MCF 10A (cell line): ENCODE measurements at regions of chr7 and their contacts with region 1.

Region 1: DNA sequence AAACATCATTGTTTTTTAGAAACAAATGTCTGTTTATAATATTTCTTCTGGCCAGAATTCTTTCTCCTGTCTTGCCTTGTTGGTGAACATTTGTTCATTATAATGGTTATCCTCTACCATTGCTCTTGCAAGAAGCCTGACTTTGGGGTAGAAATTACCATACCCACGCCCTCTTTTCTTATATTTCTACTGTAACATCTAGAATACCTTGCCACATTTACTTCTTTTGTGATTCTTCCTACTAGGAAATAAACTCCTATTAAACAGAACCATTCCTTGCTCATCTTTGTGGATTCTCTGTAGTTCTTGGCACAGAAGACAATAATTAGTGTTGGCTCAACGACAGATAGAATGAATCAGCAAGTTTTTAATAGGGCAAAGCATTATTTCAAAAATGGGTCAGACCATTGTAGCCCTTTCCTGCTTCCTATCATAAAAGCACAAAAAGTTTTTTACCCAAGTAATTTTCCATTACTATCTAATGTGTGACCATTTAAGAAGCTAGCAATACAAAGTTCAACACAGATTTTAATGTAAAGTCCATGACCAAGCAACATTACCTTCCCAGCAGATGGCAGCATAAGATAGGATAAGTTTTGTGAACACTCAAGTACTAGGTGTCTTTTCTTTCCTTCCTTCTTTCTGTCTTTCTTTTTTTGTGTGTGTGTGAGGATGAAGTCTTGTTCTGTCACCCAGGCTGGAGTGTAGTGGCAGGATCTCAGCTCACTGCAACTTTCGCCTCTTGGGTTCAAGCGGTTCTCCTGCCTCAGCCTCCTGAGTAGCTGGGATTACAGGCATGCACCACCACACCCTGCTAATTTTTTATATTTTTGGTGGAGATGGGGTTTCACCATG is 270.4 kb downstream of the HGF start:
- DNase-seq: peak; percentile 80
- H3K4me3 Mint-ChIP-seq: no peak overlapping the region
- H3K27ac Mint-ChIP-seq: no peak overlapping the region
- H3K4me1 Mint-ChIP-seq: peaks cover 9% of the 10 kb centered on the region
- H3K27me3 Mint-ChIP-seq: peaks cover 21% of the 10 kb centered on the region
- CTCF ChIP-seq: peak; percentile 54

Region 2: DNA sequence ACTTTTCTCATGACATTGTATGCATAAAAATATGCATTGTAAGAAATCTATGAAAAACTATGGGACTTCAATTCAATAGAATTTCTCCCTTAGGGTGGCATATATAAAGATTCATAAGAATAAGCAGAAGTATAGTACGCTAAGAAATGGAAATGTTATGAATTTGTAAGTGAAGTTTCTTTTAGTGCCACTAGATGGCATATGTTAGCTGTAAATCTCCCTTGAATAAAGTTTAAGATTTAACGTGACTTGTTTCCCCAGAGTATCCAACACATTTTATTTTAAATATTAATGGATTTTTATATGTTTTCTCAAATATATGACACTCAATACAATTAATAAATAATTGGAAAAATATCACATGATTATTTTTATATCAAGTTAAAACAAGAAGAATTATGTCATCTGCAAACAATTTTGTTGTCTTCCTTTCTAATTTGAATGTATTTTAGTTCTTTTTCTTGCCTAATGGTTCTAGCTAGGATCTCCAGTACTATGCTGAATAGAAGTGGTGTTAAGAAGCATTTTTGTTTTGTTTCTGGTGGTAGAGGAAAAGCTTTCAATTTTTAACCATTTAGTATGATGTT is 16.8 kb before region 1 on chr7:
- CTCF ChIA-PET with region 1: interaction called, 78 read pairs
- POLR2A ChIA-PET with region 1: no interaction called
- intact Hi-C with region 1: no loop called
- DNase-seq: peak; percentile 22
- H3K4me3 Mint-ChIP-seq: no peak overlapping the region
- H3K27ac Mint-ChIP-seq: no peak overlapping the region
- H3K4me1 Mint-ChIP-seq: no peaks in the 10 kb centered on the region
- H3K27me3 Mint-ChIP-seq: peaks cover 10% of the 10 kb centered on the region
- CTCF ChIP-seq: peak; percentile 63

Region 3: GRCh38 chr7:81529785-81530184 is 30.3 kb after region 1 on chr7:
- CTCF ChIA-PET with region 1: no interaction called
- POLR2A ChIA-PET with region 1: no interaction called
- intact Hi-C with region 1: no loop called
- DNase-seq: no peak
- H3K4me3 Mint-ChIP-seq: no peak overlapping the region
- H3K27ac Mint-ChIP-seq: no peak overlapping the region
- H3K4me1 Mint-ChIP-seq: no peaks in the 10 kb centered on the region
- H3K27me3 Mint-ChIP-seq: peaks cover 9% of the 10 kb centered on the region
- CTCF ChIP-seq: no peak

Region 4: DNA sequence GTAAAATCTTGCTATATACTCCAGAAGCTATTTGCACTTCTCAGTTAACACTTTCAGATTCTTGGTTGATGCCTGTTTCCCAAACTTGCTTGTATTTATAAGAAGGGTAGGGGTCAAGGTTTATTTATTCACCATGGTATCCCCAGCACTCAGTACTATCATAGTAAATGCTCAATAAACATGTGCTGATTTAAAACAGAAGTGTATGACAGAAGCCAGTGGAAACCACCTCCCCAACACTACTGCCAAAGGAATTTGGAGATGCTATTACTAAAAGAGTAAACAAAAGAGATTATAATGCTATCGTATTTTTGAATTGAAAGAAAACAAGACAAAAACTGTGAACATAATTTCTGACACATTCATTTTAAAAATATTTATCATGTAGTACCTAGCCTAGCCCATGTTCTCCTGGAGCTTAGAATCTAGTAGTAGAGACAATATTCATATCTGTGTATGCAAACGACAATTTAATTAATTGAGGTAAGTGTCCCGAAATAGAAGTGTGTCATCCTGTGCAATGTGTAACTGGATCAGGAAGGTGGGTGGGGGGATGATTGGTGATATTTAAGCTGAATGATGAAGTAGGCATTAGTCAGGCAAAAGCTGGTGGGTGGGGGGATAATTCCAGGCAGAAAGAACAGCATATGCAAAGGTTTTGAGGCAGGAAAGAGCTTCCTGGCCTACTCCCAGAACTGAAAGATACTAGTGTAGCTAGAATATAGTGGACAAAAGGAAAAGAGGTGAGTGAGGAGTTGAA is 192.8 kb after region 1 on chr7:
- CTCF ChIA-PET with region 1: interaction called, 14 read pairs
- POLR2A ChIA-PET with region 1: no interaction called
- intact Hi-C with region 1: no loop called
- DNase-seq: no peak
- H3K4me3 Mint-ChIP-seq: no peak overlapping the region
- H3K27ac Mint-ChIP-seq: no peak overlapping the region
- H3K4me1 Mint-ChIP-seq: peaks cover 27% of the 10 kb centered on the region
- H3K27me3 Mint-ChIP-seq: no peaks in the 10 kb centered on the region
- CTCF ChIP-seq: no peak

Region 5: DNA sequence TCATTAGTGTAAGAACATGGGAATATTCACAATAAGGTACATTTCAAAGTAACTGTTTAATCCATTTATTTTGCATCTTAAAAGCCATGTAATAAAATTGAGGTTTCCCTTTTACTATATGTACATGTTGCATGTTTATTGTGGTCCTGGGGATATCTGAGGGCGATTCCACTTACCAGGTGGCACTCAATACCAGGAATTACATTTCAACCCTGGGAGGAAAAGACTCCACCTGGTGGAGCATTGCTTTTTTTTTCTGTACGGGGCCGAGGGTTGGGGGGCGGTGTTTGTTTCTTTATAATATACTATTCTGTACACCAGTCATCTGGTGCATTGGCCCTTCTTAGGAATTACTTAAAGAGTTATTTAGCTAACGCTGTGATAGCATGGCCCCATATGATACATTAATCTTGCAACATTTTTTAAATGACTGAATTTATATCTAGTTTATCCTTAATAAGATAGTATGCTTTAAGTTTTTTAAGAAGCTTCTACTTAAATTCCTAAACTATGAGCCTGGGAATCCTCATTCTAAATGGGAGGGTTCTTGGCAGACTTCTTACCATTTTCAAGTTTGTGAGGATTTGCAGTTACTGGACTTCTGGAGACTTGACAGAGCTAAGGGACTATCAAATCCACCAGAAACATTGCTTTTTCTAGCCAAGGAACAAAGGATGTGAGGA is 277.6 kb after region 1 on chr7:
- CTCF ChIA-PET with region 1: interaction called, 8 read pairs
- POLR2A ChIA-PET with region 1: no interaction called
- intact Hi-C with region 1: loop called (anchors 2 kb)
- DNase-seq: no peak
- H3K4me3 Mint-ChIP-seq: no peak overlapping the region
- H3K27ac Mint-ChIP-seq: no peak overlapping the region
- H3K4me1 Mint-ChIP-seq: no peaks in the 10 kb centered on the region
- H3K27me3 Mint-ChIP-seq: peaks cover 88% of the 10 kb centered on the region
- CTCF ChIP-seq: no peak

Region 6: GRCh38 chr7:82010416-82010815 is 510.9 kb after region 1 on chr7:
- CTCF ChIA-PET with region 1: interaction called, 124 read pairs
- POLR2A ChIA-PET with region 1: interaction called, 3 read pairs
- intact Hi-C with region 1: no loop called
- DNase-seq: no peak
- H3K4me3 Mint-ChIP-seq: no peak overlapping the region
- H3K27ac Mint-ChIP-seq: no peak overlapping the region
- H3K4me1 Mint-ChIP-seq: no peaks in the 10 kb centered on the region
- H3K27me3 Mint-ChIP-seq: peaks cover 53% of the 10 kb centered on the region
- CTCF ChIP-seq: no peak

Region 7: GRCh38 chr7:82481499-82482097 is 982.1 kb after region 1 on chr7:
- CTCF ChIA-PET with region 1: no interaction called
- POLR2A ChIA-PET with region 1: no interaction called
- intact Hi-C with region 1: loop called (anchors 10 kb)
- DNase-seq: peak; percentile 26
- H3K4me3 Mint-ChIP-seq: no peak overlapping the region
- H3K27ac Mint-ChIP-seq: no peak overlapping the region
- H3K4me1 Mint-ChIP-seq: no peaks in the 10 kb centered on the region
- H3K27me3 Mint-ChIP-seq: peaks cover 20% of the 10 kb centered on the region
- CTCF ChIP-seq: peak; percentile 59

Region 8: DNA sequence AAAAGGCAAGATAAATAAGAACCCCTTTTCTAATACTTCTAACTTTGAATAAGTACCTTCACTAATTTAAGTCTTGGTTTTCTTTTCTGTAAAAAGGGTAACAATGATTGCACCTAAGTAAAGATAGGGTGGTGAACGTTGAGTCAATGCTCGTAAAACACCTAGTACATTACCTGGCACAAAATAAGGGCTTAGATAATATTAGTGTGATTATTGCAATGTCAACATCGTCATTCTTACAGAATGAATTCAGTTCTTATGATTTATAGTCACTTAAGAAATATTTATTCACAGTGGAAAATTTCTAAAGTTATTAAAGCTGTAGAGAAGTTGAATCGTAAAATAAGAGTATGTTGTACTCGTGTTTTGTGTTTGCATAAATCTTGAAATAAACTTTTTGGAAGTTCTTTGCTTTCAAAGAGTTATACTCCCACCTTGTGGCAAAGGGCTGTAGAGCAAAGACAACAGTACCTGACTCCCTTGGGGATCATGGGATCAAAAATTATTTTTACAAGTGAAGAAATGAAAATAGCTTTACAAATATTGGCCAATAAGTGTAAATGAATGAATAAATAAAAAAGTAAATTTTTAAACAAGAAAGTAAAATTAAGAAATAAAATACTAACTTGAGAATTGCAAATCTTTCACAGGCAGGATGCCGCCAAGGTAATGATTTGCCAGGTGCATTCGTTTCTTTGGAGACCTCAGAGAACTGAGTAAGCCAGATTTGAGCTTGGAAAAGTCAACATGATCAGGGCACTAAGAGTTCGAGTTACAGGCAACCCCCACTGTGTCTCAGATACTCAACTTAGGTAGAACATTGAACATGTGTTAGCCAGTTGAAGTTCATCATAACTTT is 1229.9 kb after region 1 on chr7:
- CTCF ChIA-PET with region 1: no interaction called
- POLR2A ChIA-PET with region 1: no interaction called
- intact Hi-C with region 1: loop called (anchors 5 kb)
- DNase-seq: peak; percentile 38
- H3K4me3 Mint-ChIP-seq: no peak overlapping the region
- H3K27ac Mint-ChIP-seq: no peak overlapping the region
- H3K4me1 Mint-ChIP-seq: no peaks in the 10 kb centered on the region
- H3K27me3 Mint-ChIP-seq: no peaks in the 10 kb centered on the region
- CTCF ChIP-seq: peak; percentile 68